CD4-positive, alpha-beta memory T cell (primary cell): ENCODE measurements at regions of chr13 and their contacts with region 1.

Region 1: DNA sequence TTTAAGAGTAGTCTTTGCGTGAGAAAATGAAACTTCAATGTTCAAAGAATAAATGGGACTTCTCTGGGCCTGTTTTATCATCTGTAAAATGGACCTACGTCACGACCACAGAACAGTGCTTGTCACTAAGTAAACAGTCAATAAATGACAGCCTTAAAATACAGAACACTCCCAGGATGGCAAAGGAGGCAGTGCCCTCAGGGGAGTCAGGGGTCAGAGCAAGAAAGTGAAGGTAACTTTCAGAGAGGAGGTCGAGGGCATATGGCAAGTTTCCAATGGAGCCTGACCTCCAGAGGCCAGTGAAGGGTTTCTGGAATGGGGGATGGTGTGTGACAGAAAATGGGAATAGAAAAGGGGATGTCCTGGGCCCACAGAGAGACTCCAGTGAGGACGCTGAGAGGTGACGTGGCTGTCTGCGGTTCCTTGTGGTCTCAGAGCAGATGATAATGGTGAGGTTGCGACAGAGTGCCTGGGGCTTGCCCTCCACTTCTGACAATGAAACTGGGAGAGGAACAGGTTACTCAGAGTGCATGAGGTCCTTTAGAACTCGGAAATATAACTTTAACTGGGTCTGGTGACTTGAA is 91.8 kb downstream of the UBL3 start:
- DNase-seq: peak; percentile 32 to 84 (median 50)
- H3K4me3 ChIP-seq: no peak overlapping the region
- H3K4me3 Mint-ChIP-seq: peak overlapping the region in 7 of 8 donors; percentile 2 to 69 (median 49)
- H3K27ac ChIP-seq: peak overlapping the region; percentile 6
- H3K27ac Mint-ChIP-seq: peak overlapping the region; percentile 68 to 98 (median 92)
- H3K4me1 ChIP-seq: peaks cover 6% of the 10 kb centered on the region
- H3K4me1 Mint-ChIP-seq: peaks cover 8 to 22% (median 13%) of the 10 kb centered on the region in 4 donors
- H3K27me3 ChIP-seq: no peaks in the 10 kb centered on the region
- H3K27me3 Mint-ChIP-seq: no peaks in the 10 kb centered on the region

Region 2: GRCh38 chr13:29771247-29771646 is 12.6 kb after region 1 on chr13:
- CTCF ChIA-PET with region 1: interaction called, 10 read pairs
- POLR2A ChIA-PET with region 1: interaction called, 3 read pairs
- intact Hi-C with region 1: no loop called
- DNase-seq: peak in 4 of 5 donors; percentile 49 to 54 (median 52)
- H3K4me3 ChIP-seq: no peak overlapping the region
- H3K4me3 Mint-ChIP-seq: no peak overlapping the region
- H3K27ac ChIP-seq: no peak overlapping the region
- H3K27ac Mint-ChIP-seq: no peak overlapping the region
- H3K4me1 ChIP-seq: no peaks in the 10 kb centered on the region
- H3K4me1 Mint-ChIP-seq: peaks cover 0 to 4% (median 3%) of the 10 kb centered on the region in 4 donors
- H3K27me3 ChIP-seq: no peaks in the 10 kb centered on the region
- H3K27me3 Mint-ChIP-seq: no peaks in the 10 kb centered on the region

Region 3: DNA sequence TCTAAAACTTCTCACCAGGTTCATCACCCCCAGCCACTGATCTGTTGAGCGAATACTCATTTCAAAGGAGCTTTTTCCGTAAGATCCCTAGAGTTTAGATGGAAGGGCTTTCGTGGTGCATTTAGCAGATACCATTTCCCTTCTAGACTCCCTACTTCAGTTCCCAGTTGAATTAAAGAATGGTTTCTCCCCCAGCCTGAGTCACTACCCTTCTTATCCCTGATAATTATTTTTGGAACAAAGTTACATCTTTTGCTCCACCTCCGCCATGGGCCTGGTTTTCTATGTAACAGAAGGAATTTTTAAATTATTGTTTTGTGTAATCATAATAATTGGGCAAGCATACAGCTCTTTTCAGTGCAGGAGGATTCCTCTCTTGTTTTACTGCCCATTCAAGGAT is 881.0 kb after region 1 on chr13:
- CTCF ChIA-PET with region 1: no interaction called
- POLR2A ChIA-PET with region 1: no interaction called
- intact Hi-C with region 1: no loop called
- DNase-seq: no peak
- H3K4me3 ChIP-seq: no peak overlapping the region
- H3K4me3 Mint-ChIP-seq: no peak overlapping the region
- H3K27ac ChIP-seq: no peak overlapping the region
- H3K27ac Mint-ChIP-seq: peak overlapping the region in 2 of 7 donors; percentile 4 to 25
- H3K4me1 ChIP-seq: peaks cover 28% of the 10 kb centered on the region
- H3K4me1 Mint-ChIP-seq: peaks cover 26 to 51% (median 37%) of the 10 kb centered on the region in 4 donors
- H3K27me3 ChIP-seq: no peaks in the 10 kb centered on the region
- H3K27me3 Mint-ChIP-seq: no peaks in the 10 kb centered on the region